HCT116 (cell line): ENCODE measurements at regions of chr15 and their contacts with region 1.

Region 1: DNA sequence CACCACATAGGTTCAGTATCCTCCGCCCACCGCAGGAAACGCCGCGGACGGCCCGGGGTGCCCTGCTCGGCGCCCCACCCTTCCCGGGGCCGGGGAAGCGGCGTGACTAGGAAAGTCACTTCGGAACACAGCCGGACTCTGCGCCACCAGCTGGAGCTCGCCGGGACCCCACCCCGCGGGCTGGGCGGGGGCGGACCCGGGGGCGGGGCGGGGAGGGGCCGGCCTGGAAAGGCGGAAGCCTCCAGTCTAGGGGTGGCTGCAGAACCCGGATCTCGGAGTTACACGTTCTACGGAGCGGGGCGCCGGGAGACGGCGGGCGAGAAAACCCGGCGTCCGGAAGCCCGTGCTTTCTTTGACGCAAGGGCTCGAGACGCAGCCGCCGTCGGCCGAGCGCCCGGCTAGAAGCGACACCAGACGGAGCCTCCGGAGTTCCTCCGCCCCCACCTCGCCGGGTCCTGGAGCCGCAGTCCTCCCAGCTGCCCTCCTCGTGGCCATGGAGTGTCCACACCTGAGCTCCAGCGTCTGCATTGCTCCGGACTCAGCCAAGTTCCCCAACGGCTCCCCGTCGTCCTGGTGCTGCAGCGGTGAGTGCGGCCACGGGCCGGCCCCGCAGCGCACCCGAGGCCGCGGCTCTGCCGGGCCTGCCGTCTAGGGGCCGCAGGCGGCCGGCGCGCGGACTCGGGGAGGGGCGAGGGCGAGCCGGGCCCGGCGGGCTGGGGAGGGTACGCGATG is at the start of gene USP3:
- DNase-seq: peak; percentile 89
- ATAC-seq: peak; percentile 64
- H3K4me3 ChIP-seq: peak within 1 kb of the TSS; percentile 72 to 78
- H3K27ac ChIP-seq: peak within 1 kb of the TSS; percentile 96
- H3K4me1 ChIP-seq: peaks cover 34 to 63% of the 10 kb centered on the region in 2 experiments
- H3K27me3 ChIP-seq: no peaks in the 10 kb centered on the region
- CTCF ChIP-seq: no peak
- POLR2A ChIP-seq: peak; percentile 75
- RAD21 ChIP-seq: no peak
- total RNA-seq, gene USP3: 61.6 TPM

Region 2: DNA sequence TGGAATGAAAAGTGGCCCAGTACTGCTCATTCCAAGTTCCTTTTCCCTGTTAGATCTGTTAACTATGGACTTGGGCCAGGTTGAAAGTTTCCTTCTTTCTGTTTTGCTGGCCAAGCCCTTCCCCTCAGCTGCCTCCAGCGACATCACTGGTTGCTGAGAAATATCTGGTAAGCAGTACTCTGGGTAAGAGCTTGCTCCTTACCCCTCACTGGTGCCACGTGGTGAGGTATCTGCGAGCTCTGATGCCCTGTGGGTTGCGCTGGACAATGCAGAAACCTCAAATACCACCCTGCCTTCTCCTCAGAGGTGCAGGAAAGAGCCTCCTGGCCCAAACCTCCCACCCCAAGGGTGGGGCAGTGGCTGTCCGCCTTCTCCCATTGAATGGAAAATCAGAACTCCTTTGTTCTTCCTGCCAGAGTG is 270.0 kb before region 1 on chr15:
- CTCF ChIA-PET with region 1: no interaction called
- POLR2A ChIA-PET with region 1: no interaction called
- RAD21 ChIA-PET with region 1: no interaction called
- intact Hi-C with region 1: no loop called
- DNase-seq: no peak
- ATAC-seq: no peak
- H3K4me3 ChIP-seq: no peak overlapping the region
- H3K27ac ChIP-seq: no peak overlapping the region
- H3K4me1 ChIP-seq: peaks cover 0 to 14% of the 10 kb centered on the region in 2 experiments; a peak in 2 of 4 replicates
- H3K27me3 ChIP-seq: no peaks in the 10 kb centered on the region
- CTCF ChIP-seq: no peak
- POLR2A ChIP-seq: no peak
- RAD21 ChIP-seq: no peak

Region 3: DNA sequence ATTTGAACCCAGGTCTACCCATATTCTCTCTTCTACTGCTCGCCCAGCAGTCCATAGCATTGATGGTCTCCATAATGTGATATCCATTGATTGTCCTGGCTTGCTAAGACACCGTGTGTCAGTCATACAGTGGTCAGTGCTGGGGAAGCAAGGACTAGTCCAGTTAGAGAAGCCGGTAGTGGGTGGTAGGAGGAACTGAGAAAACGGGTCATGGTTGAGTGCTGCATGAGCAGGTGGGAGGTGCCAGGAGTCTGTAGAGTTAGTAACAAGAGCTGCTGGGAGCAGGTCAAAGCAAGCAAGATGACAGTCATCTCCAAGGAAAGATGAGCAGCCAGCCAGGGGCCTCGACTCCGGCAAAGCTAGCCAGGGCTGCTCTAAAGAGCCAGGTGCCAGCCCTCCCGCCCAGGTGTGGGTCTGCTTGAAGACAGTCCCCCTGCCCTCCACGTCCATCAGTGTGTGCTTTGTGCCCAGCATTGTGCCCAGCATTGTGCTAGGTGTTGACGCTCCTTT is 29.5 kb before region 1 on chr15:
- CTCF ChIA-PET with region 1: no interaction called
- POLR2A ChIA-PET with region 1: interaction called, 5 read pairs
- RAD21 ChIA-PET with region 1: no interaction called
- intact Hi-C with region 1: loop called (anchors 1 kb)
- DNase-seq: no peak
- ATAC-seq: no peak
- H3K4me3 ChIP-seq: no peak overlapping the region
- H3K27ac ChIP-seq: no peak overlapping the region
- H3K4me1 ChIP-seq: peaks cover 0 to 26% of the 10 kb centered on the region in 2 experiments; a peak in 2 of 4 replicates
- H3K27me3 ChIP-seq: no peaks in the 10 kb centered on the region
- CTCF ChIP-seq: no peak
- POLR2A ChIP-seq: no peak
- RAD21 ChIP-seq: no peak

Region 4: GRCh38 chr15:63487076-63487757 is 17.2 kb before region 1 on chr15:
- CTCF ChIA-PET with region 1: interaction called, 13 read pairs
- POLR2A ChIA-PET with region 1: interaction called, 15 read pairs
- RAD21 ChIA-PET with region 1: no interaction called
- intact Hi-C with region 1: no loop called
- DNase-seq: peak; percentile 67
- ATAC-seq: peak; percentile 100
- H3K4me3 ChIP-seq: peak overlapping the region in 1 of 2 experiments; percentile 24; a peak in 1 of 4 replicates
- H3K27ac ChIP-seq: no peak overlapping the region
- H3K4me1 ChIP-seq: peaks cover under 1 to 7% of the 10 kb centered on the region in 2 experiments; a peak in 3 of 4 replicates
- H3K27me3 ChIP-seq: no peaks in the 10 kb centered on the region
- CTCF ChIP-seq: peak; percentile 49 to 98 (median 93); a peak in 5 of 6 replicates
- POLR2A ChIP-seq: no peak
- RAD21 ChIP-seq: peak; percentile 70

Region 5: DNA sequence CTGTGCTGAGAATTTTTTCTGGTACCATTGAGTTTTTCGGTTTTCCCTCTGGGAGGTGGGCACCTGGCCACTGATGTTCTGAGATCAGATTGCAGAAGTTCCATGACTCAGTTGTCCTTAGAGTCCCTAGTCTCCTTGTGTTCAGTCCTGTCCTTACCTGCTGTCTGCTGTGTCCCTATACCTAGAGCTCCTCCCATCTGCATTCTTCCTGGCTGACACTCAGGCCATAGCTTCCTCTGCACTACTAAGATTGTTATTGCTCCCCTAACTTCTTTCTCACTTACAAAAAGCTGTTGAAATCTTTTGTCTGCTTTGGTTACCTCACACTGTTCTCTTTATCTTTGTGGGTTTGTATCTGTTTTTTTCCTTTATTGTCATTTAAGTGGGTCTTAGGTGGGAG is 13.2 kb after region 1 on chr15:
- CTCF ChIA-PET with region 1: interaction called, 5 read pairs
- POLR2A ChIA-PET with region 1: interaction called, 14 read pairs
- RAD21 ChIA-PET with region 1: no interaction called
- intact Hi-C with region 1: no loop called
- DNase-seq: no peak
- ATAC-seq: peak; percentile 87
- H3K4me3 ChIP-seq: no peak overlapping the region
- H3K27ac ChIP-seq: no peak overlapping the region
- H3K4me1 ChIP-seq: peaks cover 23 to 44% of the 10 kb centered on the region in 2 experiments
- H3K27me3 ChIP-seq: no peaks in the 10 kb centered on the region
- CTCF ChIP-seq: no peak
- POLR2A ChIP-seq: no peak
- RAD21 ChIP-seq: no peak

Region 6: GRCh38 chr15:63836579-63836978 is 332.2 kb after region 1 on chr15:
- CTCF ChIA-PET with region 1: no interaction called
- POLR2A ChIA-PET with region 1: no interaction called
- RAD21 ChIA-PET with region 1: no interaction called
- intact Hi-C with region 1: no loop called
- DNase-seq: no peak
- ATAC-seq: no peak
- H3K4me3 ChIP-seq: no peak overlapping the region
- H3K27ac ChIP-seq: no peak overlapping the region
- H3K4me1 ChIP-seq: peaks cover 4 to 14% of the 10 kb centered on the region in 2 experiments; a peak in 3 of 4 replicates
- H3K27me3 ChIP-seq: no peaks in the 10 kb centered on the region
- CTCF ChIP-seq: no peak
- POLR2A ChIP-seq: no peak
- RAD21 ChIP-seq: no peak

Region 7: DNA sequence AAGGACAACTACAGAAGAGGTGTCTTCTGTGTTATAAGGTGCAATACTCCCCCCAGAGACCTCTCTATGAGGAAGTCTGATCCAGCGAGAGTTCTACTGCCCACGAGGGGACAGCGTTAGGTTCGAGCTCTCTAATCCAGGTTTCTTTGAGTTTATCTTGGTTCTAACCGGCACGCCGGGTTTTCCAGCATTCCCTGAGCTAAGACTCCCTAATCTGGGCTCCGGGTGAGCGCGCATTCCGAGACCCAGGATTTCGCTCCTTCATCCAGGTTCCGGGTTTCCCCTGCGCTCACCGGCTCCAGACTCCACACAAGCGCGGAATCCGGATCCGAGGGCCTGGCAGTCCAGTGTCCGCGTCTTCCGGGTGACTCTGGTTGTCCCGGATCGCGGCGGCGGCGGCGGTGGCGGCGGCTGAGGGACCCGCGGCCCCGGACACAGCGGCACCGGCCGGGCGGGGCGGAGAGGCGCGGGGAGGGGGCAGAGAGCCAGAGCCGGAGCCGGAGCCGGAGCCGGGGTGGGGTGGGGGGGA is 955.9 kb after region 1 on chr15 and contains the start of gene ZNF609:
- CTCF ChIA-PET with region 1: no interaction called
- POLR2A ChIA-PET with region 1: no interaction called
- RAD21 ChIA-PET with region 1: no interaction called
- intact Hi-C with region 1: loop called (anchors 5 kb)
- DNase-seq: peak; percentile 95
- ATAC-seq: peak; percentile 90
- H3K4me3 ChIP-seq: peak within 1 kb of the TSS; percentile 49 to 65
- H3K27ac ChIP-seq: peak within 1 kb of the TSS; percentile 60
- H3K4me1 ChIP-seq: peaks cover 16 to 19% of the 10 kb centered on the region in 2 experiments
- H3K27me3 ChIP-seq: no peaks in the 10 kb centered on the region
- CTCF ChIP-seq: no peak
- POLR2A ChIP-seq: no peak
- RAD21 ChIP-seq: peak; percentile 19
- total RNA-seq, gene ZNF609: 31.0 TPM